ENCODE measurements at regions of chr16 and their contacts with region 1.

Region 1: DNA sequence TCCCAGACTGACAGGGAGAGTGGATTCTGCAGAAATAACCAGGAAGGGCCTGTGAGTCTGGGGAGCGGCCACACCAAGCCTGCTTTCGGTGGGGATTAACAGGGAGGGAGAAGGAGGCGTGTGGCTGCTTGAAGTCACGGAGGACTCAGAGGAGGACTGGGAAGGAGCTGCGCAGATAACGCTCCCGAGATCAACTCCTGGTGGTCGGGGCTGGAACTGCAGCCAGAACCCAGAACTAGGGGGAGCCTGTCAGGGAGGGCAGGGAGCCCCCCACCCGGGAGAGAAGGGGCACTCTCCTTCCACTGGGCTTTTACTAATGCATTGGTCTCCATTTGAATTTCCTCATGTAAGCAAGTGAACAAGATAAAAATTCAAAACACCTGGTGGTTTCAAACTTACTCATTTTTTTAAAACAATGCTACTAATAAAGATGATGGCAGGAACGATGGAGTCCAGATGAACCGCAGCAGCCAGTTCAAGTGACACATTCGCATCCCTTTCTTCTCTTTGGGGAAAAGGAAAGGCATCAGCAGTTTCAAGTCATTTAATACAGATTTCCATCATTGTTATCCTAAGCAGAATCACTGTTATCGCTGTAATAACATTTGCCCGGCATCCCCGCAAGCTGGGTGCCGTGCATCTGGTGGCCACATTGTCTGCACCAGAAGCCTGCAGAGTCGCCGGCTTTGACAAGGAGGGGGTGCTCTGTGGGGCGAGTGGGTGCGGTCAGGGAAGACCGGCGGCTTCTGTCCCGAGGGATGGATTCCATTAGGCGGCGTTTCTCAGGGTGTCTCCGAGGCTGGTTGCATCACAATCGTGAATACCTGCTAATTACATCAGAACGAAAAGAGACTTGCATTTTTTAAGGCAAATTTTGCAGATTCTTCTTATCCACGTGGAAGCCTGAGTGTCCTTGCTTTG is 183.0 kb downstream of the FOXL1 start:
- DNase-seq: peak; percentile 48
- H3K4me3 ChIP-seq: no peak overlapping the region
- H3K27ac ChIP-seq: no peak overlapping the region
- H3K4me1 ChIP-seq: no peaks in the 10 kb centered on the region
- H3K27me3 ChIP-seq: no peaks in the 10 kb centered on the region
- CTCF ChIP-seq: peak; percentile 82

Region 2: GRCh38 chr16:86387461-86388440 is 373.6 kb before region 1 on chr16:
- intact Hi-C with region 1: no loop called
- DNase-seq: no peak
- H3K4me3 ChIP-seq: no peak overlapping the region
- H3K27ac ChIP-seq: no peak overlapping the region
- H3K4me1 ChIP-seq: no peaks in the 10 kb centered on the region
- H3K27me3 ChIP-seq: no peaks in the 10 kb centered on the region
- CTCF ChIP-seq: no peak

Region 3: GRCh38 chr16:86570558-86571529 is 190.5 kb before region 1 on chr16:
- intact Hi-C with region 1: loop called (anchors 5 kb)
- DNase-seq: no peak
- H3K4me3 ChIP-seq: no peak overlapping the region
- H3K27ac ChIP-seq: no peak overlapping the region
- H3K4me1 ChIP-seq: no peaks in the 10 kb centered on the region
- H3K27me3 ChIP-seq: peaks cover 67% of the 10 kb centered on the region
- CTCF ChIP-seq: no peak

Region 4: GRCh38 chr16:86910161-86910769 is 148.9 kb after region 1 on chr16:
- intact Hi-C with region 1: no loop called
- DNase-seq: no peak
- H3K4me3 ChIP-seq: no peak overlapping the region
- H3K27ac ChIP-seq: no peak overlapping the region
- H3K4me1 ChIP-seq: no peaks in the 10 kb centered on the region
- H3K27me3 ChIP-seq: no peaks in the 10 kb centered on the region
- CTCF ChIP-seq: no peak